ENCODE measurements at regions of chr16 and their contacts with region 1.

Region 1: GRCh38 chr16:59411961-59412841 is 678.1 kb upstream of the GOT2 start:
- DNase-seq: peak; percentile 32
- H3K4me3 ChIP-seq: no peak overlapping the region
- H3K27ac ChIP-seq: no peak overlapping the region
- H3K4me1 ChIP-seq: no peaks in the 10 kb centered on the region
- H3K27me3 ChIP-seq: no peaks in the 10 kb centered on the region
- CTCF ChIP-seq: peak in 1 of 2 donors; percentile 24
- POLR2A ChIP-seq: no peak

Region 2: DNA sequence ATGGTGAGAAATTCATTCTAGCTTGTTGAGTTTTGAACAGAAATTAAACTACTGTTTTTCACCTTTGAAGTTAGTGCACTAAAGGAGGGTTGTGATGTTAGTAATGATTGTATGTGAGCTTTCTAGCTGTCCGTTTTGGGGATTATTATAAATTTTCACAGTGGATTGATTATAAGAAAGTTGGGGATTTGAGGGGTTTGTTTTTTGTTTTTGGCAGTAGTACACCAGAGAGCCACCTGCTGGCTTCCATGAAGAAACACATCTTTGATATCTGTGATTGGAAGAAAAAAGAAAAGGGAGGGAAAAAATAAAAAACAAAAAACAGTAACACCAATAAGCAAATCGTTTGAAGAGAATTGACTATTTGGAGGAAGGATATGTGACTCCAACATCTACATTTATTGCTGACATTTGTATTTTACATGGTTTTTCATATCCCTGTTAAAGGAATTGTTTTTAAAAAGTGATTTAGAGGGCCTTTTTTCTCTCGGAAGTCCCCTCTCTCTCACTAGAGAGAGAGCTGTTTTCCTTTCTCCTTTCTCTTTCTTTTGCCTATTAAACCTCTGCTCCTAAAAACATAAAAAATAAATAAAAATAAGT is 791.4 kb after region 1 on chr16:
- CTCF ChIA-PET with region 1: interaction called, 11 read pairs
- POLR2A ChIA-PET with region 1: no interaction called
- dilution Hi-C with region 1: no loop called
- intact Hi-C with region 1: loop called (anchors 1 kb)
- DNase-seq: peak; percentile 49
- H3K4me3 ChIP-seq: no peak overlapping the region
- H3K27ac ChIP-seq: no peak overlapping the region
- H3K4me1 ChIP-seq: no peaks in the 10 kb centered on the region
- H3K27me3 ChIP-seq: no peaks in the 10 kb centered on the region
- CTCF ChIP-seq: peak; percentile 30 to 45
- POLR2A ChIP-seq: no peak

Measured in endothelial cell of umbilical vein (primary cell).